Motor neuron (in vitro differentiated cells): ENCODE measurements at regions of chr1 and their contacts with region 1.

Region 1: GRCh38 chr1:1919304-1920056 is 401 bp upstream of the TMEM52 start:
- ATAC-seq: peak; percentile 77 to 92 (median 81)
- H3K4me3 ChIP-seq: peak overlapping the region; percentile 33 to 43 (median 39)
- H3K27ac ChIP-seq: peak overlapping the region in 1 of 2 donors; percentile 3
- H3K4me1 ChIP-seq: peaks cover 7 to 26% of the 10 kb centered on the region in 2 donors

Region 2: DNA sequence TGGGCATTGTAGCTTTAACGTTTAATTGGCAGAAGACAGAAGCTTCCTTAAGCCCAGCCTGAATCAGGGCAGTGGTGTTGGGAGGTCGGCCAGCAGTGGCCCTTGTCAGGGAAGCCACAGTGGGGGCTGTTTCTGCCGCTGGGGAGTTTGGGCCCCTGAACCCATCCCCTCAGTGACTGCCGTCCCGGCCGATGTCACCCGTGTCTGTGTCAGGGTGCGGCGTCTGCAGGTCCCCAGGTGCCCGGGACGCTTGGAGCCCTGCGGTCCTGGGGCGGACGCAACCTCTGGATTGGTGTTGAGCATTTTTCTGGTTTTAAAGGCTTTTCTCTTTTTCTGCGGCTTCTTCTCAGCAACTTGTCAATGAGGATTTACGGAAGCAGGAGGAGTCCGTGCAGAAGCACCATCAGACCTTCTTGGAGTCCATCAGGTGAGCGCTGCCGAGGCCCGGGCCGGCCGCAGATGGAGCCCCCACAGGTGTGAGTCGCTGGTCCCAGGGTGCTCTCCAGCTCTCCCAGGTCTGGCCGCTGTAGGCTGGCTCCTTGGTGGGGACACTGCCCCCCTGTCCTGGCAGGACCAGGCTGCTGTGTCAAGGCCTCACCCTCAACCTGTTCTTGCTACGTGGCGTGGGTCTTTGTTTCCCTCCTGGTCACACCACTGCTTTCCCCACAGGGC is 467.6 kb before region 1 on chr1:
- in situ Hi-C with region 1: no loop called
- ATAC-seq: no peak
- H3K4me3 ChIP-seq: no peak overlapping the region
- H3K27ac ChIP-seq: no peak overlapping the region
- H3K4me1 ChIP-seq: no peaks in the 10 kb centered on the region

Region 3: GRCh38 chr1:1763657-1764616 is 155.5 kb before region 1 on chr1:
- in situ Hi-C with region 1: loop called in 1 of 9 experiments (anchors 25 kb)
- ATAC-seq: peak in 5 of 8 experiments; percentile 26 to 64 (median 47)
- H3K4me3 ChIP-seq: no peak overlapping the region
- H3K27ac ChIP-seq: no peak overlapping the region
- H3K4me1 ChIP-seq: no peaks in the 10 kb centered on the region